B cell (primary cell): ENCODE measurements at regions of chr12 and their contacts with region 1.

Region 1: DNA sequence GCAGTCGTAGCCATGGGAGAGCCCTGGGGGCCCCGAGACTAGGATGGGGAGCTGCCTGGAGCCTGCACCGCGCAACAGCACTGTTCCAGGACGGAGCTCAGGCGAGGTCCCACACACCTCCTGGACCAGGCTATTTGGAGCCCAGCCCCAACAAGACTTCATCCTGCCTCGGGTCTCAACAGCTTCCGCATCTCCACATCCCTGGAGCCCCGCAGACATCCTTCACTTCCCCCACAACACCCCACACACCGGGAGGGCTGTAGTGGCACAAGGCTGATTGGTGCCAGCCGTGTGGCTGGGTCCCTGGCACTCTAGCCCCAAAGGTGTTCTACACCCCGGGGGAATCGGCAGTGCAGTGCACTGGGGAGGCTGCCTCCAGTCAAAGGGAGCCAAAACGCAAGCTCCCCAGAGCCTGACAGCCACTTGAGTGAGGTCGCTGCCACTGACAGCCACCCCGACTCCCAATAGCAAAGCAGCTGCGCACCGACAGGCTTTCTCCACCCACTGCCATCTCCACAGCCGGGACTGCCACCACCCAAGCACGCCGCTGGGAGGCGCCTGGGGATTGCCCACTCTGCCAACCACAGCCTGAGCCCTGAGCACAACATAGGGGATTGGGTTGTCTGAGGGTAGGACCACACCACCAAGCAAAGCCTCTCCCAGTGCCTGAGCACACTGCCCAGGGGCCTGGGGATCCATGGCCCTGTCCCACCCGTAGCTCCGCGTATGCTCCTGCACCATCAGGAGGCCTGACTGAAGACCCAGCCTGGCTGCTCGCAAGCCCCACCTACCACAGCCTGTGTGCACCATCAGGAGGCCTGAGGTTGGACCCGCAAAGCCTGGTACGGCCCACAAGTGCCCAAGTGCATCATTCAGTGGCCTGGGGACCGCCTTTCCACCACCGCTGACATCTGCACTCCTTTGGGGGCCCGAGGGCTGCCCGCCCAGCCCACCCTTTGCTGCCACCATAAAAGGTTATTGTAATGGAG is 13.2 kb upstream of the KLRF1 start:
- DNase-seq: peak; percentile 88
- ATAC-seq: peak; percentile 97
- H3K4me3 ChIP-seq: peak overlapping the region in 4 of 5 experiments; percentile 33 to 63 (median 48)
- H3K4me3 Mint-ChIP-seq: peak overlapping the region; percentile 77
- H3K27ac ChIP-seq: no peak overlapping the region
- H3K27ac Mint-ChIP-seq: no peak overlapping the region
- H3K4me1 ChIP-seq: peaks cover 10 to 23% of the 10 kb centered on the region in 2 donors
- H3K4me1 Mint-ChIP-seq: peaks cover 21% of the 10 kb centered on the region
- H3K27me3 ChIP-seq: peaks cover 0 to 9% (median 0%) of the 10 kb centered on the region in 4 experiments
- H3K27me3 Mint-ChIP-seq: peaks cover 23% of the 10 kb centered on the region
- CTCF ChIP-seq: peak; percentile 93

Region 2: GRCh38 chr12:9869307-9870161 is 55.4 kb after region 1 on chr12 and contains the start of gene CLEC2B:
- CTCF ChIA-PET with region 1: interaction called, 7 read pairs
- POLR2A ChIA-PET with region 1: no interaction called
- intact Hi-C with region 1: loop called (anchors 5 kb)
- DNase-seq: peak; percentile 76
- ATAC-seq: peak; percentile 66
- H3K4me3 ChIP-seq: peak within 1 kb of the TSS; percentile 51 to 97 (median 66)
- H3K4me3 Mint-ChIP-seq: peak within 1 kb of the TSS; percentile 92
- H3K27ac ChIP-seq: peak within 1 kb of the TSS; percentile 89 to 90
- H3K27ac Mint-ChIP-seq: peak within 1 kb of the TSS; percentile 99
- H3K4me1 ChIP-seq: peaks cover 14 to 18% of the 10 kb centered on the region in 2 donors
- H3K4me1 Mint-ChIP-seq: peaks cover 41% of the 10 kb centered on the region
- H3K27me3 ChIP-seq: no peaks in the 10 kb centered on the region
- H3K27me3 Mint-ChIP-seq: no peaks in the 10 kb centered on the region
- CTCF ChIP-seq: no peak
- total RNA-seq, gene CLEC2B: 30.5 and 31.6 TPM in 2 replicates

Region 3: DNA sequence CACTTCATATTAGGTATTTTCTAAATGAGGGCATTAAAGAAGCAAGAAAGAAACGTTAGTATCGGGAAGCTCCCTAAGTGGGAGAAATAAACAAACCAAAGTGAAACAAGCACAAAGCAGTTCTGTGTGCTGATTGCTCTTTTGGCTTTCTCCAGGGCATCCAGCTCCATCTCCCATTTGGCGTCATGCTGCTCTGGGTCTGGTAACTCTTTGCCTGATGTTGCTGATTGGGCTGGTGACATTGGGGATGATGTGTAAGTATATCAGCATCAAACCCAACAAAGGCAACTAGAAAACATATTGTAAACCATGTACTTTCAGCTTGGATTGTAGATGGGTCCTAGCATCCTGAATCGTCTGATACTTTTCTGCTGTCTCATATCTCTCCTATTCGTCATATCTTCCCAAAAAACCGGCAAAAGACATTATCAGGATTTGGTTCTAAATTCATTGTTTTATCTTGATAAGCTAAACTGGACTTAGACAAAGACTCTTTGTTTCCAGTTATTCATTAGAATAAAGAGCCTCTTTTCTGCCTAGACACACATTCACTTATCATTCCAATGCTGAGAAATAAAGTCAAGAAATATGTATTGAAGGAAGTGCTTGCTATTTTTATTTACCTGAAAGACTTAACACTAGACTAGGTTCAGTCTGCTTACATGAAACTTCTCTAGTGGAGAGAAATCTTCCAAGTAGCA is 198.7 kb after region 1 on chr12:
- CTCF ChIA-PET with region 1: interaction called, 5 read pairs
- POLR2A ChIA-PET with region 1: no interaction called
- intact Hi-C with region 1: loop called (anchors 2 kb)
- DNase-seq: no peak
- ATAC-seq: no peak
- H3K4me3 ChIP-seq: no peak overlapping the region
- H3K4me3 Mint-ChIP-seq: no peak overlapping the region
- H3K27ac ChIP-seq: no peak overlapping the region
- H3K27ac Mint-ChIP-seq: no peak overlapping the region
- H3K4me1 ChIP-seq: no peaks in the 10 kb centered on the region
- H3K4me1 Mint-ChIP-seq: no peaks in the 10 kb centered on the region
- H3K27me3 ChIP-seq: peaks cover 0 to 5% (median 2%) of the 10 kb centered on the region in 4 experiments
- H3K27me3 Mint-ChIP-seq: peaks cover 47% of the 10 kb centered on the region
- CTCF ChIP-seq: no peak